ENCODE measurements at regions of chr4 and their contacts with region 1.

Region 1: GRCh38 chr4:101287324-101287723 is 60.0 kb downstream of the PPP3CA start:
- DNase-seq: no peak
- ATAC-seq: no peak
- H3K4me3 ChIP-seq: no peak overlapping the region
- H3K27ac ChIP-seq: no peak overlapping the region
- H3K4me1 ChIP-seq: peaks cover 35% of the 10 kb centered on the region
- H3K27me3 ChIP-seq: no peaks in the 10 kb centered on the region
- CTCF ChIP-seq: no peak

Region 2: GRCh38 chr4:101101072-101101471 is 186.3 kb before region 1 on chr4:
- CTCF ChIA-PET with region 1: no interaction called
- POLR2A ChIA-PET with region 1: no interaction called
- intact Hi-C with region 1: no loop called
- DNase-seq: peak; percentile 48
- ATAC-seq: peak; percentile 88
- H3K4me3 ChIP-seq: no peak overlapping the region
- H3K27ac ChIP-seq: peak overlapping the region; percentile 61
- H3K4me1 ChIP-seq: peaks cover 14% of the 10 kb centered on the region
- H3K27me3 ChIP-seq: no peaks in the 10 kb centered on the region
- CTCF ChIP-seq: no peak

Region 3: GRCh38 chr4:101299899-101300540 is 12.7 kb after region 1 on chr4:
- CTCF ChIA-PET with region 1: no interaction called
- POLR2A ChIA-PET with region 1: no interaction called
- intact Hi-C with region 1: loop called (anchors 2 kb)
- DNase-seq: no peak
- ATAC-seq: no peak
- H3K4me3 ChIP-seq: no peak overlapping the region
- H3K27ac ChIP-seq: no peak overlapping the region
- H3K4me1 ChIP-seq: peaks cover 3% of the 10 kb centered on the region
- H3K27me3 ChIP-seq: no peaks in the 10 kb centered on the region
- CTCF ChIP-seq: no peak

Measured in PC-3 (cell line).